ENCODE measurements at regions of chr2 and their contacts with region 1.

Region 1: GRCh38 chr2:236512902-236513435 is 56.7 kb upstream of the ACKR3 start:
- DNase-seq: peak; percentile 81
- ATAC-seq: peak; percentile 96
- H3K4me3 Mint-ChIP-seq: no peak overlapping the region
- H3K27ac Mint-ChIP-seq: no peak overlapping the region
- H3K4me1 Mint-ChIP-seq: peaks cover 10% of the 10 kb centered on the region
- H3K27me3 Mint-ChIP-seq: peaks cover 4% of the 10 kb centered on the region

Region 2: DNA sequence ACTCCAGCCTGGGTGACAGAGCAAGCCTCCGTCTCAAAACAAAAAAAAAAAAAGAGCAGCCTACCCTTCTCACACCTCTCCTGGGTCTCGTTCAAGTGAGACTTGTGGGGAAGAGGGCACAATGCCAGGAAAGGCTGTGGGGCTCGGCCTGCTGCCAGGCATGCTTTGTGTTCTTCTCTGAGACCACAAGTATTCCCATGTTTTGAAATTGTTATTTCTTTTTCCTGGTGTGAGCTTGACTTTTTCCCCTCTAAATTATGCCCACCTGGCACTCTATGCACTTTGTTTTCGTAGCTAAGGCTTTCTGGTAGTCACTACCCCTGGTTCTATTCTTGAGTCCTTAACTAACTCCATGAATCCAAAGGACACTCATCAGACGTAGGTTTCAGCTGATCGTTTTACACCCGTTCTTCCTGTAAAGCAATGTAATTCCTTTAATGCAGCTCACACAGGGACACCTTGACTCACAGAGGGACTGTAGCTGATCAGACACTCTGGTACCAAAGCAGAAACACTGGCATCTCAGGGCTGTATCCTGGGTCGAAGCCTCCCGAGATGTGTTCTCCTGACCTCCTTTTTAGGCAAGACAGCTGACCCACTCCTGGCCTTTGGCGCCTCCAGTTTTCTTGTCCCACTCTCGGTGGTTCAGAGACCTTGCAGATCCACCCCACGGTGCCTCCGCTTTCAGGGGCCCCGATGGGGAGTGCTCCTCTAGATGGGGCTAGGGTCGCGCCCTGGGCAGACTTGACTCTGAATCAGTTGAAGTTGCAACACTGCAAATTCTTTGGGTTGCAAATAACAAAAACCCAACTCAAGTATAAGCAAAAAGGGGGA is 1212.4 kb before region 1 on chr2:
- CTCF ChIA-PET with region 1: no interaction called
- POLR2A ChIA-PET with region 1: no interaction called
- intact Hi-C with region 1: no loop called
- DNase-seq: no peak
- ATAC-seq: no peak
- H3K4me3 Mint-ChIP-seq: no peak overlapping the region
- H3K27ac Mint-ChIP-seq: no peak overlapping the region
- H3K4me1 Mint-ChIP-seq: no peaks in the 10 kb centered on the region
- H3K27me3 Mint-ChIP-seq: peaks cover 28% of the 10 kb centered on the region

Region 3: DNA sequence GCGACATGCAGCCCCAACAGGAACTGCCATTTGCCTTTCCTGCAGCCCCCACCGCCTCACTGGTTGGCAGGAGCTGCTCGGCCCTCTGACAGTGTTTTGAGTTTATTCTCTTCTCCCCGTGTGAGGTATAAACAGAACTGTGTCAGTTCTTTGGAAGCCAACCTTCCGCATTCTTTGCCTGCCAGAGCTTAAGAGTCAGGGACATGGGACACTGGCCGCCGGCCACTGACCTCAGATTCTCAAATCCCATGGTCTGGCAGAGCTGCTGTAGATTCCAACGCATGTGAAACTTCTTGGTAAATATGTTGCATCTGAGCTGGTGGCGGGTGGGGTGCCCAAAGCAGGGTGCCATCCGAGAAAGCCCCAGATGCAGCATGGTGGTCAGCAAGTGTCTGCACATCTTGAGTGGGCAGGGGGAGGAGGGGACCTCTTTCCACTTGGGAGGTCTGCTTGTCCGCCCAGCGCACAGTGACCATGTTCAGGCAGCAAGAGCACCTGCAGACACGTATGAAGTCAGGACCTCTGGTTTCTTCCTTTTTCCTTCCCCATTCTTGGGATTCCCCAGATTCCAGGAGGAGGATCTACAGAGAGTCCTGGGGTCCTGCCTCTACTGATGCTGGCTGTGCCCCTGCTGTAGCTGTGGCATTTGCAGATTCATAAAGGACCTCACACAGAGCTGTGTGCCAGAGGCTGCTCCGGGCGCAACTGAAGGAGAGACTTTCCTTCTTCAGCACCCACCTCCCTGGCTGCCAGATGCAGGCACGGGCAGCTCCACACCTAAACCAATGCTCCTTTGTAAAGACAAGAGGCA is 272.5 kb before region 1 on chr2:
- CTCF ChIA-PET with region 1: no interaction called
- POLR2A ChIA-PET with region 1: no interaction called
- intact Hi-C with region 1: no loop called
- DNase-seq: no peak
- ATAC-seq: no peak
- H3K4me3 Mint-ChIP-seq: no peak overlapping the region
- H3K27ac Mint-ChIP-seq: no peak overlapping the region
- H3K4me1 Mint-ChIP-seq: peaks cover 2% of the 10 kb centered on the region
- H3K27me3 Mint-ChIP-seq: peaks cover 31% of the 10 kb centered on the region

Region 4: GRCh38 chr2:236352761-236353593 is 160.0 kb before region 1 on chr2:
- CTCF ChIA-PET with region 1: interaction called, 3 read pairs
- POLR2A ChIA-PET with region 1: no interaction called
- intact Hi-C with region 1: loop called in 1 of 2 experiments (anchors 2 kb)
- DNase-seq: peak; percentile 48
- ATAC-seq: peak; percentile 36
- H3K4me3 Mint-ChIP-seq: no peak overlapping the region
- H3K27ac Mint-ChIP-seq: no peak overlapping the region
- H3K4me1 Mint-ChIP-seq: peaks cover 2% of the 10 kb centered on the region
- H3K27me3 Mint-ChIP-seq: peaks cover 2% of the 10 kb centered on the region

Region 5: GRCh38 chr2:236536727-236537398 is 23.9 kb after region 1 on chr2:
- CTCF ChIA-PET with region 1: interaction called, 13 read pairs
- POLR2A ChIA-PET with region 1: interaction called, 3 read pairs
- intact Hi-C with region 1: loop called in 1 of 2 experiments (anchors 2 kb)
- DNase-seq: peak; percentile 68
- ATAC-seq: peak; percentile 76
- H3K4me3 Mint-ChIP-seq: peak overlapping the region; percentile 86
- H3K27ac Mint-ChIP-seq: peak overlapping the region; percentile 96
- H3K4me1 Mint-ChIP-seq: peaks cover 51% of the 10 kb centered on the region
- H3K27me3 Mint-ChIP-seq: no peaks in the 10 kb centered on the region

Region 6: GRCh38 chr2:236550701-236551465 is 37.9 kb after region 1 on chr2:
- CTCF ChIA-PET with region 1: interaction called, 14 read pairs
- POLR2A ChIA-PET with region 1: no interaction called
- intact Hi-C with region 1: no loop called
- DNase-seq: peak; percentile 69
- ATAC-seq: peak; percentile 17
- H3K4me3 Mint-ChIP-seq: no peak overlapping the region
- H3K27ac Mint-ChIP-seq: no peak overlapping the region
- H3K4me1 Mint-ChIP-seq: peaks cover 97% of the 10 kb centered on the region
- H3K27me3 Mint-ChIP-seq: no peaks in the 10 kb centered on the region

Region 7: DNA sequence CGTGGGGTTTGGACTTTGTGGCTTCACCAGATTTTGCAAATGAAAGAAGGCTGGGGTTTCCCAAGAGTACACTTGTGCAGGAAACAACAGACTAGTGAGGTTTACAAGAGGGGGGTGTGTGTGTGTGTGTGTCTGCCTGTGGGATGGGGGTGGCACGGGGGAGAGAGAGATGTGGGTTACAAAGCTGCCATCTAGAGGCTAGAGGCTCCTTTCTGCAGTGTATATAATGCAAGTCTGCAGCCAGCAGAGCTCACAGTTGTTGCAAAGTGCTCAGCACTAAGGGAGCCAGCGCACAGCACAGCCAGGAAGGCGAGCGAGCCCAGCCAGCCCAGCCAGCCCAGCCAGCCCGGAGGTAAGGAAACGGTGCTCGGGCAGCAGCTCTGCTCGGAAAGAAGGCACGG is 56.6 kb after region 1 on chr2 and contains the start of gene ACKR3:
- CTCF ChIA-PET with region 1: interaction called, 114 read pairs
- POLR2A ChIA-PET with region 1: interaction called, 4 read pairs
- intact Hi-C with region 1: loop called (anchors 1 kb)
- DNase-seq: peak; percentile 82
- ATAC-seq: peak; percentile 99
- H3K4me3 Mint-ChIP-seq: peak within 1 kb of the TSS; percentile 74
- H3K27ac Mint-ChIP-seq: no peak within 1 kb of the TSS
- H3K4me1 Mint-ChIP-seq: peaks cover 17% of the 10 kb centered on the region
- H3K27me3 Mint-ChIP-seq: no peaks in the 10 kb centered on the region
- total RNA-seq, gene ACKR3: 1.2 to 2.4 TPM

Region 8: GRCh38 chr2:237026981-237027711 is 514.2 kb after region 1 on chr2:
- CTCF ChIA-PET with region 1: interaction called, 3 read pairs
- POLR2A ChIA-PET with region 1: no interaction called
- intact Hi-C with region 1: loop called in 1 of 2 experiments (anchors 5 kb)
- DNase-seq: peak; percentile 66
- ATAC-seq: no peak
- H3K4me3 Mint-ChIP-seq: no peak overlapping the region
- H3K27ac Mint-ChIP-seq: no peak overlapping the region
- H3K4me1 Mint-ChIP-seq: no peaks in the 10 kb centered on the region
- H3K27me3 Mint-ChIP-seq: no peaks in the 10 kb centered on the region

Region 9: GRCh38 chr2:237072067-237072931 is 559.3 kb after region 1 on chr2:
- CTCF ChIA-PET with region 1: interaction called, 4 read pairs
- POLR2A ChIA-PET with region 1: no interaction called
- intact Hi-C with region 1: loop called (anchors 1 to 5 kb)
- DNase-seq: peak; percentile 82
- ATAC-seq: peak; percentile 39
- H3K4me3 Mint-ChIP-seq: no peak overlapping the region
- H3K27ac Mint-ChIP-seq: no peak overlapping the region
- H3K4me1 Mint-ChIP-seq: no peaks in the 10 kb centered on the region
- H3K27me3 Mint-ChIP-seq: no peaks in the 10 kb centered on the region